Spleen (tissue), 13 donors: ENCODE measurements at regions of chr7 and their contacts with region 1.

Region 1: DNA sequence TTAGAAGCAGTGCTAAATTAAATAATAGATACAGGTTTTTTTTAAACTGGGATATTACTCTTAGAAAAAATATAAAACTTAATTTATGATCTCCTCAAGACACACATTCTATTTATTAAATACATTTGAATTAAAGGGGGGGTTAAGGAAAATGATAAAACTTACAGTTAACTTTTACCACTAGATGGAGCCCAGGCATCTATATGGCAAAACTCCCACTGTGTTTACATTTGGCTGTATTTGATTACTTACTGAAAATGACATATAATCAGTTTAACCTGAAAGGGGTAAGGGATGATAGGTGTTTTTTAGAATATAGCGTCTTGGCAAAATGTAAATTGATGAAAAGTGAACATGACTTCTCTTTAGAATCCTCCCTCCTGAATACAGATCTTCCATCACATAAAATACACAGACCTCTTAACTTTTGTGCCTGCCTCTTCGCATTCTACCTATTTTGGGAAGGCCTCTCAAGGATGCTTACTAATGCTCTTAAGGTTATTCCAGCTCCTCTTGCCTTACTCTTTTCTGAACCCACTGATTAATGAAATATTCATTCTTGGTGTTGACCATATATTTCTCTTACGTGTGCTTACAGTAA is 235.7 kb downstream of the AGMO start:
- DNase-seq: no peak
- H3K4me3 ChIP-seq: no peak overlapping the region
- H3K27ac ChIP-seq: no peak overlapping the region
- H3K4me1 ChIP-seq: no peaks in the 10 kb centered on the region
- H3K27me3 ChIP-seq: no peaks in the 10 kb centered on the region
- CTCF ChIP-seq: peak in 5 of 11 experiments; percentile 8 to 39 (median 22)
- POLR2A ChIP-seq: no peak

Region 2: GRCh38 chr7:15389073-15389472 is 62.9 kb after region 1 on chr7:
- intact Hi-C with region 1: no loop called
- DNase-seq: no peak
- H3K4me3 ChIP-seq: no peak overlapping the region
- H3K27ac ChIP-seq: no peak overlapping the region
- H3K4me1 ChIP-seq: no peaks in the 10 kb centered on the region
- H3K27me3 ChIP-seq: no peaks in the 10 kb centered on the region
- CTCF ChIP-seq: no peak
- POLR2A ChIP-seq: no peak

Region 3: DNA sequence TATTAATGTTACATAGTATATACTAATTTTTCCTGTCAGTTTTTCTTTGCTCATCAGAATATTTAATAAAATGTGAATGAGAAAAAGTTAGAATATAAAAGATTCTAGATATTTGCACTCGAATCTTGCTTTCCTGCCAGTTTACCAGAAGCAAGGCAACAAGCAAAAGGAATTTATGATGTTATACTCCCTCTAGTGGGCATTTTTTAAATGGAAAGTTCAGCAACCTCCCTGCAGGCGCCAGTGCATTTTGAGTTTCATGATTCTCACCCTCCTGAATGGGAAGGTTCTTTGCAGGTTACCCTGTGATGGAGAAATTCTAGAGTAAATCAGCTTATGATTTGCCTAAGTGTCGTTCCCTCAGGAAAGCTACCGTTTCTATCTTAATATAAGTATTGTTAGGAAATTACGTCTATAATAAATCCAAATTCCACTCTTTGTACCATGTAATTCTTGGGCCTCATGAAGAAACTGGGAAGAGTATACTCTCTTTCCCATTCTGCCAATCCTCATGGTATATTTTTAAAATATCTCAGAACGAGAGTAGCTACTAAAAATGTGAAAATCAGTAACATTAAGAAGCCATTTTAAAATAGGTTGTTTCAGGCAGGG is 745.2 kb after region 1 on chr7:
- intact Hi-C with region 1: loop called (anchors 10 kb)
- DNase-seq: no peak
- H3K4me3 ChIP-seq: no peak overlapping the region
- H3K27ac ChIP-seq: no peak overlapping the region
- H3K4me1 ChIP-seq: peaks cover 0 to 7% (median 0%) of the 10 kb centered on the region in 6 donors
- H3K27me3 ChIP-seq: no peaks in the 10 kb centered on the region
- CTCF ChIP-seq: peak; percentile 36 to 80 (median 71)
- POLR2A ChIP-seq: no peak